Activated T-helper 1 cell treated with anti-CD3 and anti-CD28 coated beads, Interleukin-12 subunit alpha, Interleukin-12 subunit beta, Interleukin-2, Interleukin-4 antibody, amounts not matched to agents 30 ng/mL and 10 ng/mL and 1 ng/mL, durations not matched to agents 14 hours and 24 hours and 36 hours (primary cell): ENCODE measurements at regions of chr19 and their contacts with region 1.

Region 1: GRCh38 chr19:11924886-11925650 is at the start of gene ZNF700:
- DNase-seq: peak; percentile 89
- H3K4me3 Mint-ChIP-seq: peak within 1 kb of the TSS; percentile 96
- H3K27ac Mint-ChIP-seq: peak within 1 kb of the TSS; percentile 98
- H3K4me1 Mint-ChIP-seq: peaks cover 33% of the 10 kb centered on the region
- H3K27me3 Mint-ChIP-seq: no peaks in the 10 kb centered on the region
- total RNA-seq, gene ZNF700: 11.9 and 12.2 TPM in 2 replicates

Region 2: DNA sequence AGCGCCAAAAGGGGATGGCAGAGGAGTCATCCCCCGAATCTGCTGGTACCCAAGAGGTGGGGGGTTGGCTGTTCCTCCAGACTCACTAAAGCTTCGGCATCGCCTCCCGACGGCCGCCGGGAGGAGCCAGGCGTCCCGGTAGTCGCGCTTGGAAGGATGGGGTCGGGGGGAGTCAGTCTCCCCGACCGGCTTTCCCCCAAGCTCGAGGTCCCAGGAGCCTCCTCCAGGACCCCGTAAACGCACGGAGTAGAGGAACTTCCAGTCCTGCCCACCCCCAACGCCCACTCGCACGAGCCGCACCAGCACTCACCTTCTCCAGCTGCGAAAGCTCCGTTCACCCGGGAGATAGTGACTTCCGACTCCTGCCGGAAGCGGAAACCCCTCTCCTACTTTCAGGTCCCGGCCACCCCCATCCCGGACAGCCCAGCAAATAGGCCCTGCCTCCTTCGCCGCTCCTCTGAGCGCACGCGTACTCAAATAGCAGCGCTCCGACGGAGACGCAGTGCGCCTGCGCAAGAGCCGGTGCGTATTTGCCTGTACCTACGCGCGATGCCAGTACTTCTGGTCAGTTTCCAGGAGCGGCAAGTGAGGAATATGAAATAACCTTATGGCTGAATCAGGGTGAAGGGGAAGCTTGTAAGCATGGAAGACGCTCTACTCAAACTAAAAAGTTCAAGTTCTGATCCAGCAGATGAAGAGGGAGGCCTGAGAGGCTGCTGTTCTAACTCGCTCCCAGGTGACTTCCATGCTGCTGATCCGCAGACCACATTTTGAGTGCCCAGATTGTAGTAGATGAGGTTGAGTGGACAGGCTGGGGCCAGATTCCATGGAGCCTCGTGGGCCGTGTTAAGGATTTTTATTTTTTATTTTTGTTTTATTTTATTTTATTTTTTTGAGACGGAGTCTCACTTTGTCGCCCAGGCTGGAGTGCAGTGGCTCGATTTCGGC is 365.9 kb before region 1 on chr19 and contains the start of gene ELOF1:
- intact Hi-C with region 1: loop called (anchors 10 kb)
- DNase-seq: peak; percentile 97
- H3K4me3 Mint-ChIP-seq: peak within 1 kb of the TSS; percentile 92
- H3K27ac Mint-ChIP-seq: peak within 1 kb of the TSS; percentile 96
- H3K4me1 Mint-ChIP-seq: peaks cover 42% of the 10 kb centered on the region
- H3K27me3 Mint-ChIP-seq: no peaks in the 10 kb centered on the region
- total RNA-seq, gene ELOF1: 76.7 and 77.6 TPM in 2 replicates

Region 3: GRCh38 chr19:11814029-11814699 is 110.9 kb before region 1 on chr19 and contains the start of gene ZNF440:
- intact Hi-C with region 1: loop called (anchors 2 kb)
- DNase-seq: peak; percentile 84
- H3K4me3 Mint-ChIP-seq: peak within 1 kb of the TSS; percentile 88
- H3K27ac Mint-ChIP-seq: peak within 1 kb of the TSS; percentile 69
- H3K4me1 Mint-ChIP-seq: peaks cover 13% of the 10 kb centered on the region
- H3K27me3 Mint-ChIP-seq: peaks cover 1% of the 10 kb centered on the region
- total RNA-seq, gene ZNF440: 6.7 and 9.2 TPM in 2 replicates

Region 4: DNA sequence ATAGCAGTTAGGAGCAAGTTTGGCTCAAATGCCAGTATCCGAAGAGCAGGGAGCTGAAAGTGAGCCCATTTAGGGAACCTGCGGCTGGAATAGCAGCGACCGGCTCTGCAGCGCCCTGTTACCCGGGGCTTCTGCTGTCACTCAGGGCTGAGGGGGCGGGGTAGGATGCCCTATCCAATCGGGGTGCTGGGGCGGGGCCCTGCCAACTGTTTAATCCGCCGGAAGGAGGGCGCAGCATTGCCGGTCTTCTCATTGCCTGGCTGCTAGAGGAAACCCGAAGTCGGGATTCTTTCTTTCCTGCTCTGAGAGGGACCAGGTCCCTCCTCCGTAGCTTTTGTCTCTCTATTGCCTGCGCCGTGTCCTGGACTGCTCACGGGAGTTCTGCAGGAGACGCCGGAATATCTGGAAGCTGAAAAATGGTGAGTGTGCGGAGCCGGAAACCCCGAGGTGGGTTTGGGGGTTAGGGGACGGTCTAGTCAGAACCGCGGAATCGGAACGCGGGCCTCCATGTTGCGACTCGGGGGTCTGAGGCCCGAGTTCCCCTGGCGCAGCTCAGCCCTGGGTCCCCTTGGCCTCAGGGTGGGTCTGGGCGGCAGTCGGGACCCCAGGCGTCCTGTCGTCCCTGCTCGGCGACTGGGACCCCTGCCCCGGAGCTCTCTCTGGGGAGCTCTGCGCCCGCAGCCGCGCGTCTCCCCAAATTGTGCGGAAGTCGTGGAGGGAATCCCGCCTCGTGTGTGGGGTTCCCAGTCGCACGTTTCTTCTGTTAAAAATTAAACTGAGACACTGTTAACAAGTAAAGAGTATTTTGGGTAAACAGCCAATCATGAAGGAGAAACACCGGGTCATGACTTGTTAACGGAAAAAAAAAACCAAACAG is 62.6 kb after region 1 on chr19:
- intact Hi-C with region 1: loop called (anchors 1 kb)
- DNase-seq: peak; percentile 81
- H3K4me3 Mint-ChIP-seq: peak overlapping the region; percentile 98
- H3K27ac Mint-ChIP-seq: peak overlapping the region; percentile 94
- H3K4me1 Mint-ChIP-seq: peaks cover 20% of the 10 kb centered on the region
- H3K27me3 Mint-ChIP-seq: no peaks in the 10 kb centered on the region

Region 5: GRCh38 chr19:12139885-12140547 is 214.9 kb after region 1 on chr19 and contains the start of gene ZNF20:
- intact Hi-C with region 1: loop called (anchors 1 kb)
- DNase-seq: peak; percentile 86
- H3K4me3 Mint-ChIP-seq: peak within 1 kb of the TSS; percentile 93
- H3K27ac Mint-ChIP-seq: peak within 1 kb of the TSS; percentile 80
- H3K4me1 Mint-ChIP-seq: peaks cover 34% of the 10 kb centered on the region
- H3K27me3 Mint-ChIP-seq: no peaks in the 10 kb centered on the region
- total RNA-seq, gene ZNF20: 2.8 and 3.5 TPM in 2 replicates

Region 6: GRCh38 chr19:12244370-12244769 is 319.3 kb after region 1 on chr19:
- intact Hi-C with region 1: no loop called
- DNase-seq: no peak
- H3K4me3 Mint-ChIP-seq: no peak overlapping the region
- H3K27ac Mint-ChIP-seq: no peak overlapping the region
- H3K4me1 Mint-ChIP-seq: no peaks in the 10 kb centered on the region
- H3K27me3 Mint-ChIP-seq: no peaks in the 10 kb centered on the region

Region 7: DNA sequence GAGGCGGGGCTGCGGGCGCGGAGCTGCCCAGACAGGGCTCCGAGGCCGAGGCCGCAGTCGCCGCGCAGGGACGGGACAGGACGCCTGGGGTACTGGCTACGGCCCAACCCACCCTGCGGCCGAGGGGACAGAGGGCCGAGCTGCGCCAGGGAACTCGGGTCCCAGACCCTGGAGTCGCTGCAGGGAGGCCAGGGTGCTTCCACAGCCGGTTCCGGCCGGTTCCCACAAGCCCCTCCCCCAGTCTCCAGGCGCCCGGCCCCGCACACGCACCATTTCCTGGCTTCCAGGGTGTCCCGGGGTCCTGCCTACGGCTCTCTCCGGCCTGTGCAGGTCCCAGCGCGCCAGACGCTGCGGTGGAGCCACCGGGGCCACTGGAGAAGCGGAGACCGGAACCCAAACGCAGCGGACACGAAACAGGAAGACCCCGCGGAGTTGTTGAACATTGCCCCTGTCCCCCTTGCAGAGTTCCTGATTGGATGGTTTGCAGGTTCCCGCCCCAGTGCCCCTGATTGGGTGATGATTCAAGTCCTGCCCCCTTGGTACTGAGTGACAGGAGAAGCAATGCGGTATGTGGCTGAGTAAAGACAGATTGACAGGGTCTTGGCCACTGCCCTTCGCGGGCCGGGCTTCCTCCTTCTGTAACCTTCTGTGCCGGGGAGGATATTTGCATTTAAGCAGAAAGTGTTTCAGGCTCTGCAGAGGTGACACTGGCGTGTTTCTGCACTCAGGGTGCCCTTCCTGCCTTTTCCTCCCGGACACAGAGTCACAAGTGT is 626.2 kb after region 1 on chr19 and contains the start of gene ZNF564:
- intact Hi-C with region 1: loop called (anchors 5 kb)
- DNase-seq: peak; percentile 92
- H3K4me3 Mint-ChIP-seq: peak within 1 kb of the TSS; percentile 95
- H3K27ac Mint-ChIP-seq: peak within 1 kb of the TSS; percentile 91
- H3K4me1 Mint-ChIP-seq: peaks cover 20% of the 10 kb centered on the region
- H3K27me3 Mint-ChIP-seq: no peaks in the 10 kb centered on the region
- total RNA-seq, gene ZNF564: 7.4 and 8.3 TPM in 2 replicates